Mammary epithelial cell (primary cell): ENCODE measurements at regions of chr20 and their contacts with region 1.

Region 1: DNA sequence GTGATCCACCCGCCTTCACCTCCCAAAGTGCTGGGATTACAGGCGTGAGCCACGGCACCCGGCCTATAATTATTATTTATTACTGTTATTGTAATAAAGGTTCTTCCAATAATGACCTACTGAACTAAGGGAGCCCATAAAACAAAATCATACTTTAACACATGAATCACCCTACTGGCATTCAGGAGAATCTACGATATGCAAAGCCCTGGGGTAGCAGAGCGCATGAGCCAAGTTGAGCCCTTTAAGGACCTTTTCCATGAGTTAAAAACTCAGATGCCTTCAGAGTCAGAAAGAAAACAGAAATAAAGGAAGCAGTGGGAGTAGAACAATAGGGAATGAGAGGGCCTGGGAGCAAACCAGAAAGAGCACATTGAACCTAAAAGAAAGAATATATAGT is 41.5 kb downstream of the SNRPB start:
- DNase-seq: no peak
- H3K4me3 ChIP-seq: no peak overlapping the region
- H3K27ac ChIP-seq: no peak overlapping the region
- H3K4me1 ChIP-seq: no peaks in the 10 kb centered on the region
- H3K27me3 ChIP-seq: no peaks in the 10 kb centered on the region
- CTCF ChIP-seq: no peak

Region 2: DNA sequence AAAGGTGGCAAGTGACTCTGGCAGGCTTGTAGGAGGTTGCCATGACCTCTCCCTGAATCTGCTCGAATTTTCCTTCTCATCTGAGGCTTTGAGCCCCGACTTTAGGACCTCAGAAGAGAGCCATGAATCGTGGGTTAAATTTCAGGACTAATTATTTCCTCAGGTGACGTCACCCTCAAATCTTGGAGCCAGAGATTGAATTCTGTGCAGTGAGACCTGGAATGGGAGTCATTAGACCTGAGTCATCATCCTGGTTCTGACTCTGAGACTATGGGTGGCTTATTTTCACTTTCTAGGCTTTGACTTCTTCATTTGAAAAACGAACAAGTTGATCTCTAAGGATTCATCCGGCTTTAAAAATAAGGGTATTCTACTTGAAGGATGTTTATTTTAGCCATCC is 386.7 kb before region 1 on chr20:
- CTCF ChIA-PET with region 1: no interaction called
- dilution Hi-C with region 1: loop called (anchors 5 kb)
- in situ Hi-C with region 1: no loop called
- intact Hi-C with region 1: no loop called
- DNase-seq: peak; percentile 64
- H3K4me3 ChIP-seq: no peak overlapping the region
- H3K27ac ChIP-seq: no peak overlapping the region
- H3K4me1 ChIP-seq: no peaks in the 10 kb centered on the region
- H3K27me3 ChIP-seq: peaks cover 7% of the 10 kb centered on the region
- CTCF ChIP-seq: no peak

Region 3: GRCh38 chr20:2458919-2459499 is 29.9 kb after region 1 on chr20:
- CTCF ChIA-PET with region 1: no interaction called
- dilution Hi-C with region 1: no loop called
- in situ Hi-C with region 1: no loop called
- intact Hi-C with region 1: no loop called
- DNase-seq: no peak
- H3K4me3 ChIP-seq: no peak overlapping the region
- H3K27ac ChIP-seq: no peak overlapping the region
- H3K4me1 ChIP-seq: no peaks in the 10 kb centered on the region
- H3K27me3 ChIP-seq: no peaks in the 10 kb centered on the region
- CTCF ChIP-seq: no peak

Region 4: DNA sequence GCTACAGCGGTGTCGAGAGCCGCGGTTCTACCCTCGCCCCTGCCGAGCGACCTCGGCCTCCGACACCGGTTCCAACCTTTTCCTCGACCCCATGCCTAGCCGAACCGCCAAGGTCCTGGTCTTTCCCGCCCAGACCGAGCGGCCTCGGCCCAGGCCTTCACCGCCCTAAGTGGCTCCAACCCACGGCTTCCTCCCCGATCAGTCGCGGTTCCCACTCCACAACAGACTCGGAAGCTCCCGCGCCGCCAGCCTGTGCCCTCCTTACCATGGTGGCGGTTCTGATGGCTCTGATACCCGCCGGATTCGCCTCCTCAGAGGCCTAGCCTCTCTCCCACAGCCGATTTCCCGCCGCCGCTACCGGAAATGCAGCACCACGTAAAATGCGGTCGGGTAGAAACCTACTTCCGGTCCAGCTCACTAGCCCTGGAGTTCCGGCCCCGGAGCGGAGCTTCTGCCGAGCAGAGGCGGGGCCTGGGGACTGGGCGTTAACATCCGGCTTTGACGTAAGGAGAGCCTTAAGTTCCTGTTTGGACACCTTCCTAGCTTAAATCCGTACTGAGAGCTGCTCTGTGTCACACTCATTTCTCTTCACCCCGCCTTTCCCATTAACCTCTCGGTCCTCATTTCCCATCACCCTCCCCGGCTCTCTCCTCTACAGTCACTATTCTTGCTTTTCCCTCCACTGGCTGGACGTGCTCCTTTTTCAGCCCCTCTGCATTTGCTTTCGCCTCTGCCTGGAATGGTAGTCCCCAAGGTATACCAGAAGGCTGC is 41.5 kb after region 1 on chr20 and contains the start of gene SNRPB:
- CTCF ChIA-PET with region 1: no interaction called
- dilution Hi-C with region 1: loop called (anchors 5 kb)
- in situ Hi-C with region 1: no loop called
- intact Hi-C with region 1: no loop called
- DNase-seq: peak; percentile 98
- H3K4me3 ChIP-seq: peak within 1 kb of the TSS; percentile 73 to 94 (median 83)
- H3K27ac ChIP-seq: peak within 1 kb of the TSS; percentile 88
- H3K4me1 ChIP-seq: peaks cover 19% of the 10 kb centered on the region
- H3K27me3 ChIP-seq: no peaks in the 10 kb centered on the region
- CTCF ChIP-seq: no peak
- total RNA-seq, gene SNRPB: 90.7 to 216 TPM

Region 5: DNA sequence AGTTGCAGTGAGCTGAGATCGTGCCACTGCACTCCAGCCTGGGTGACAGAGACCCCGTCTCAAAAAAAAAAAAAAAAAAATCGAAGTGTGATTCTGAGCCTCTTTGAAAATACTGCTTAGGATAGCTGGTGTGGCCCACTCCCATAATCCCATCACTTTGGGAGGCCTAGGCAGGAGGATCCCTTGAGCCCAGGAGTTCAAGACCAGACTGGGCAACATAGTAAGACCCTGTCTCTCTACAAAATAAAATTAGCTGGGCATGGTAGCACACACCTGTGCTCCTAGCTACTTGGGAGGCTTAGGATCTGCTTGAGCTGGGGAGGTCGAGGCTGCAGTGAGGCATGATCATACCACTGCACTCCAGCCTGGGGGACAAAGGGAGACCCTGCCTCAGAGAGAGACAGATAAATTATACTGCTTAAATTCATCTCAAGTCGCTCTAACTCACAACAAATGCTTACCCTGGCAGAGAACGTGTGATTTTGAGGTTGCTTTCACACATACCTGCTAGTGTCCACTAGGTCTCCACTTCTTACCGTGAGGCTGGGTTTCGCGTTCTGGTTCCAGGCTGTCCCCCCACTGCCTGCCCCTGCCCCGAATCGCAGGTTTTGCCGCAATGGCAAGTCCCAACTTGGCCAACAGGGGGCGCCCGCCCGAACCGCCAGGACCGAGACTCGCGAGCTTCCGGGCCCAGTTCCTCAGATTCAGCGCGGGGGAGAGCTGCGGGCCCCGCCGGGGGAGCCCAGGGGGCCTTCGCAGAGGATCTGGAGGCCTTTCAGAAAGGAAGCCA is 95.1 kb after region 1 on chr20:
- CTCF ChIA-PET with region 1: no interaction called
- dilution Hi-C with region 1: no loop called
- in situ Hi-C with region 1: no loop called
- intact Hi-C with region 1: no loop called
- DNase-seq: peak; percentile 40
- H3K4me3 ChIP-seq: peak overlapping the region; percentile 67 to 91 (median 83)
- H3K27ac ChIP-seq: peak overlapping the region; percentile 34
- H3K4me1 ChIP-seq: peaks cover 6% of the 10 kb centered on the region
- H3K27me3 ChIP-seq: no peaks in the 10 kb centered on the region
- CTCF ChIP-seq: peak; percentile 76 to 94